Posterior cingulate gyrus (tissue), 11 donors: ENCODE measurements at regions of chr3 and their contacts with region 1.

Region 1: DNA sequence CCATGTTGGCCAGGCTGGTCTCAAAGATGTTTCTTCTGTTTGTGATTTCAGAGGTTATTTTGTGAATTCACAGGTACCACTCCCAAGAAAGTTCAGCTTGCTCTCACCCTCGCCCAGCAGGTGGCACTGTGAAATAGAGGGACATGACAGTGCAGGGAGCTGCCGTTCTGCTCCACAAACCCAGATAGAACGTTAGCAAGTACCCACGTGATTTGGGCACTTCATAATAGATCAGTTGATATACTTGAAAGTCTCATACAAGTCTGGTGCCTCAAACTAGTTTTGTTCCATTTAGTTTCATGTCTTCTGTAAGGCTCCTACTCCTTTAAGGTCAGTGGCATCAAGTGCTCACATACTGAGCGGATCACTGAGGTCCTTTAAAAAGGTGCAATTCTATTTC is 45.5 kb downstream of the FILIP1L start:
- DNase-seq: peak in 9 of 10 donors; percentile 41 to 95 (median 65)

Region 2: GRCh38 chr3:99842826-99843589 is 225.8 kb before region 1 on chr3:
- intact Hi-C with region 1: loop called (anchors 10 kb)
- DNase-seq: no peak